Adrenal gland (tissue), 19 donors: ENCODE measurements at regions of chr10 and their contacts with region 1.

Region 1: GRCh38 chr10:29841724-29842649 is 207.2 kb upstream of the SVIL start:
- DNase-seq: peak in 1 of 7 donors; percentile 68
- H3K4me3 ChIP-seq: no peak overlapping the region
- H3K27ac ChIP-seq: no peak overlapping the region
- H3K4me1 ChIP-seq: no peaks in the 10 kb centered on the region
- H3K27me3 ChIP-seq: no peaks in the 10 kb centered on the region
- CTCF ChIP-seq: no peak
- POLR2A ChIP-seq: no peak

Region 2: GRCh38 chr10:29496341-29497162 is 345.4 kb before region 1 on chr10:
- intact Hi-C with region 1: no loop called
- DNase-seq: peak; percentile 74 to 90 (median 83)
- H3K4me3 ChIP-seq: no peak overlapping the region
- H3K27ac ChIP-seq: no peak overlapping the region
- H3K4me1 ChIP-seq: no peaks in the 10 kb centered on the region
- H3K27me3 ChIP-seq: no peaks in the 10 kb centered on the region
- CTCF ChIP-seq: peak; percentile 88 to 96 (median 90)
- POLR2A ChIP-seq: no peak

Region 3: DNA sequence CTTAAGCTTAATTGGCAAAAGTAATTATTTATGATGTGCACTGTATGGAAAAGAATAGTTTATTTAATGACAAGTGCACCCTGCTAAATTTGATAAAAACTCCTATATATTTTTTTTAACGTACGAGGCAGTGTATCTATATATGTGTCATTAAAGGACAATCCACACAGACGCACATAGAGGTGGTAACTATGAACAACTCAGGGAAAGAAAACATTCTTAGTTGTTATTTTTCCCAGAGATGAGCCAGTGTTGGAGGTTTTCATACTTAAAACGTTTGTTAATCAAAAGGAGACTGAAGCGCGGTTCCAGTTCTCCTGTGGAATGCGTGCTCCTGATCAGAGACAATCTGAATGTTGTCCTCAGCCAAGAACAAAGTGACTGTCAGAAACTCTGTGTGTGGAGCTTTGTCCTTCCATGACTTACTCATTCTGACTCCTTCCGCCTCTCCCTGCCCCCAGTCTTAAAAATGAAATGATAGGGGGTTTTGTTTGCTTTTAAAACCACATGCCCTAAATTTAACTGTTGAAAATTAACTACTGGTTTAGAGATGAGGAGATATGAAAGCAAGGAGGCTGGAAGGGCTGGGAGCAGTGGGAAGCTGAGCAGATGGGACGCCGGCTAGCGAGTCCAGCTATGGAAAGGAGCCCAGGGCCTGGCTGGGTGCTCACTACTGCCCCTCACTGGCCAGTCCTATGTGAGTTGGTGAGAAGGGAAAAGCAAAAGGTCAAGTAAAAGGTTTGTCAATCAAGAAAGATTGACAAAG is 306.8 kb before region 1 on chr10:
- intact Hi-C with region 1: loop called in 1 of 2 experiments (anchors 10 kb)
- DNase-seq: peak; percentile 33 to 69 (median 55)
- H3K4me3 ChIP-seq: peak overlapping the region in 1 of 4 donors; percentile 17
- H3K27ac ChIP-seq: peak overlapping the region in 3 of 5 donors; percentile 43 to 72 (median 60)
- H3K4me1 ChIP-seq: peaks cover 0 to 8% of the 10 kb centered on the region in 2 donors
- H3K27me3 ChIP-seq: no peaks in the 10 kb centered on the region
- CTCF ChIP-seq: peak; percentile 40 to 64 (median 51)
- POLR2A ChIP-seq: peak in 1 of 2 donors; percentile 31